GM13976 (cell line): ENCODE measurements at regions of chr17 and their contacts with region 1.

Region 1: DNA sequence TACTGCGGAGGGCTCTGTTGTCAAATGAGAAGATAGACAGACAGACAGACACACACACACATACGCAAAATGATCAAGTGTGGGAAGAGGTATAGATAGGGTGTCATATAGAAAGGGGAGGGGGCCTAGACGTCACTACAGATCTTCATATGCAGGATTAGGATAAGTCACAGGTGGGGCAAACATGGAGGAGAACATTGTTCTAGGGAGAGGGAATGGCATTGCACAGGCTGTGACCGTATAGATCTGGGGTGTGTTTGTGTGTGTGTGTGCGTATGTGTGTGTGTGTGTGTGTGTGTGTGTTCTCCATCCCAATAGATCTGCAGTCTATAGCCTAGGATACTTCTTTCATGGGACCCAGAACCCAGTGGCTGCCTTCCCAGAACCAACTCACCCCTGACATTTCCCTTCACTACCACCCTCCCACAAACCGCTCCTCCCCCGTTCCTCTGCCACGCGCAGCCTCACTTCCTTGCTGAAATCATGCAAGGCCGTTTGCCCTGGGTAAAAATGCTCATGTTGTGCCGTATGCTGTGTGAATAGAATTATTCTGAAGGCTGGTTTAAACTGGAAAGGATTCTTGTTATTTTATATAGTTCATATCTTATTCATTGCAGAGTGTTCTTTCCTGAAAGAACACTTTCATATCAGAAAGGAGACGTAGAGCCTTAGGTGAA is 50.5 kb upstream of the CCL1 start:
- DNase-seq: no peak
- CTCF ChIP-seq: no peak

Region 2: DNA sequence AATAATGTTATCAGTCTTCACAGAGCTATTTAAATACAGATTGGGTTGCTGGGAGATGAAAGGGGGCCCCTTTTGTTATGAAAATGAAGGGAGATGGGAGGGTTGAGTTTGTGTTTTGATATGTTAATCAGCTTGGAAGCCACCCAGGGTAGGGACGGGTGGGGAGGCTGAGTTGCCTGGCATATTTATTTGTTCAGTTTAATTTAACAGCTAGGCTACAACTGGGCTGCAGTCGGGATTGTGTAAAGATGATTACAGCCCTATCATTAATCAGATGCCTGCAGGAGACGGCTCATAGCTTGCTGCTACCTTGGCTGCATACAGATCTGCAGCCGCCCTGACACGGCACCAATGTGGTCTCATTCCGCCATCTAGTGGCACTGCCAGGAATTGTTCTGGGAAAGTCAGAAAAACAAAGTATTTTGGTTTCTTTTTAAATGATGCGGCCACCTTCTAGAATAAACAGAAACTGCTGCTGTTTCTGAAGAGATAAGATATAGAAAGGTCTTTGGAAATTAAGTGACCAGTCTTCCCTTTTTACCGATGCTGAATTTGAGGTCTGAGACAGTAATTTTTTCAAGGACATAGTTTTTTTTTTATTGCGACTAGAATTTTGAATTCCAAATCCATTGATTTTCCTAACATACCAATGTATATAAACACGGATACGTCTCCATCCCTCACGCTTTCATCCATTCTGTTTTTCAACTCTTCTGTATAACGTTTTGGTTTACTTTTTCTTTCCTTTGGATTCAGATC is 662.5 kb before region 1 on chr17:
- in situ Hi-C with region 1: no loop called
- DNase-seq: peak; percentile 57
- CTCF ChIP-seq: peak; percentile 92

Region 3: GRCh38 chr17:34533811-34534527 is 120.4 kb after region 1 on chr17:
- in situ Hi-C with region 1: loop called (anchors 10 kb)
- DNase-seq: no peak
- CTCF ChIP-seq: no peak